Thyroid gland (tissue), 4 donors: ENCODE measurements at regions of chr3 and their contacts with region 1.

Region 1: DNA sequence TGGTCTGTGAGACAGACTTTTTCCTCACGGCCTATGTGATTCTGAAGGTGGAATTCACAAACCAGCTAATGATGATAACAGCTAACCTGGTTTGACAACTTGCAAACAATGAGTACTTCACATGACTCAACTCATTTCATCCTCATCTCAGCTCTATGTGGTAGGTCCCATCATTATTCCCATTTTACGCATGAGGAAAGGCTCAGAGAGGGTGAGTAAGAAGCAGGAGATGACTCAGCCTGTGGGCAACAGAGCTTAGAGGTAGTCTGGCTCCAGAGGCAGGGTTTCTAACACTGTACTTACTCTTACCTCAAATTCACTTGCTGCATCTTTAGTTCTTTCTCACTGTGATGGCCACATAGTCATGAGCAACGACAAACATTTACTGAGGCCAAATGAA is 25.8 kb upstream of the PSMD6 start:
- DNase-seq: no peak
- H3K4me3 ChIP-seq: no peak overlapping the region
- H3K27ac ChIP-seq: peak overlapping the region in 1 of 3 donors; percentile 78
- H3K4me1 ChIP-seq: peaks cover 26 to 27% of the 10 kb centered on the region in 2 donors
- H3K27me3 ChIP-seq: no peaks in the 10 kb centered on the region
- CTCF ChIP-seq: no peak
- POLR2A ChIP-seq: no peak

Region 2: GRCh38 chr3:64143409-64144130 is 94.4 kb after region 1 on chr3:
- intact Hi-C with region 1: loop called (anchors 10 kb)
- DNase-seq: no peak
- H3K4me3 ChIP-seq: no peak overlapping the region
- H3K27ac ChIP-seq: no peak overlapping the region
- H3K4me1 ChIP-seq: peaks cover 0 to 9% of the 10 kb centered on the region in 2 donors
- H3K27me3 ChIP-seq: no peaks in the 10 kb centered on the region
- CTCF ChIP-seq: no peak
- POLR2A ChIP-seq: no peak

Region 3: GRCh38 chr3:64187065-64187959 is 138.2 kb after region 1 on chr3:
- intact Hi-C with region 1: no loop called
- DNase-seq: peak; percentile 71 to 72
- H3K4me3 ChIP-seq: no peak overlapping the region
- H3K27ac ChIP-seq: peak overlapping the region; percentile 81 to 86 (median 85)
- H3K4me1 ChIP-seq: peaks cover 59 to 70% of the 10 kb centered on the region in 2 donors
- H3K27me3 ChIP-seq: no peaks in the 10 kb centered on the region
- CTCF ChIP-seq: no peak
- POLR2A ChIP-seq: no peak